ENCODE measurements at regions of chr3 and their contacts with region 1.

Region 1: DNA sequence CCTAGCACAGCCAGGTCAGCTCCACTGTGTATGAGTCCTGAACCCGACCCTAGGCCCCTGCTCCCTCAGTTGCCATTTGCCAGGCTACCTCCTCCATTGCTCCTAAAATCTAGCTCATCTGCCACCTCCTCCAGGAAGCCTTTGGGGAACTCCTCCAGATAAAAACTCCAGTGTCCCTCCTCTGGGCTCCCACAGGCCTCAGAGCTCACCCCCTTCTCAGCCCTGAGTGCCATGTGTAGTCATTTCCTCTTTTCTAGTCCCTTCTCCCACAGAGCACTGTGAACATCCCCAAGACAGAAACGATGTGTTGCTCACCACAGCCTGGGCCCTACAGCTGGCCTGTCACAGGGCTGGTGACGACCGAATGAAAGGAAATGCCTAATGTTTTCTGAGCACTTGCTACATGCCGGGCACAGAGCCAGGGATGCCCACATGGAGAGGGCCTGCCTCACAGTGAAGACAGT is 61.0 kb downstream of the IQSEC1 start:
- DNase-seq: peak; percentile 85
- H3K4me3 Mint-ChIP-seq: peak overlapping the region; percentile 75
- H3K27ac Mint-ChIP-seq: peak overlapping the region; percentile 96
- H3K4me1 Mint-ChIP-seq: peaks cover 80% of the 10 kb centered on the region
- H3K27me3 Mint-ChIP-seq: no peaks in the 10 kb centered on the region

Region 2: GRCh38 chr3:11626084-11626463 is 1386.2 kb before region 1 on chr3:
- intact Hi-C with region 1: loop called (anchors 5 kb)
- DNase-seq: peak; percentile 81
- H3K4me3 Mint-ChIP-seq: peak overlapping the region; percentile 57
- H3K27ac Mint-ChIP-seq: peak overlapping the region; percentile 77
- H3K4me1 Mint-ChIP-seq: peaks cover 56% of the 10 kb centered on the region
- H3K27me3 Mint-ChIP-seq: no peaks in the 10 kb centered on the region

Region 3: DNA sequence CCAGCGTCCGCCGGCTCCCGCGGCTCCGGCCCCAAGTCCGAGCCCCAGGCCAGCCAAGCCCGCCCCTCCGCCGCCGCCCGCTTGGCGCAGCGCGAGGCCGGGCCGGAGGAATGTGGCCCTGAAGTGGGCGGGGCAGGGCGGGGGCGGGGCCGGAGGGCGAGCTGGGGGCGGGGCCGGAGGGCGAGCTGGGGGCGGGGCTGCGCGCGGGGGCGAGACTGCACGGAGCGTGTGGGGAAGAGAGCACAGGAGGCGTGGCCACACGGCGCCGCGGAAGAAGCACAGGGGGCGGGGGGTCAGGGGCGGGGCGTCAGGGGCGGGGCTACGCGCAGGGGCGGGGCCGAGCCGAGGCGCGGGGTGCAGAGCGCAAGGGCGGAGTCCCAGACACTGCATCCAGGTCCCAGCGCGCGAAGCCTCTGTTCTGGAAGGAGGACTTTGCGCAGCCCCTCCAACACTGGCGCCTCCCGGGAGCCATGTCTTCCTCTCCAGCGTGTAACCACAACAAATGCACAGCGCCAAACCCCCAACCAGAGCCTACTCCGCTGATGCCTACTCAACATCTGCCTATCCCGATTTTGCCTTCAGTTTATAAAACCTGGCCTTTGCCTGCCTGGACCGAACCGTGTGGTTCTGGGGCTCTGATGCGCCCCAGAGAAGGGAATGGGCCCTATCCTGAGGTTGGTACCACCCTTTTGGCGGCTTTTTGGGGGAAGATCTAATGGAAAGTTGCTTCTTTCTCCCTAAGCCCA is 44.5 kb before region 1 on chr3:
- intact Hi-C with region 1: loop called (anchors 1 kb)
- DNase-seq: peak; percentile 95
- H3K4me3 Mint-ChIP-seq: peak overlapping the region; percentile 68
- H3K27ac Mint-ChIP-seq: peak overlapping the region; percentile 23
- H3K4me1 Mint-ChIP-seq: peaks cover 33% of the 10 kb centered on the region
- H3K27me3 Mint-ChIP-seq: peaks cover 3% of the 10 kb centered on the region

Region 4: DNA sequence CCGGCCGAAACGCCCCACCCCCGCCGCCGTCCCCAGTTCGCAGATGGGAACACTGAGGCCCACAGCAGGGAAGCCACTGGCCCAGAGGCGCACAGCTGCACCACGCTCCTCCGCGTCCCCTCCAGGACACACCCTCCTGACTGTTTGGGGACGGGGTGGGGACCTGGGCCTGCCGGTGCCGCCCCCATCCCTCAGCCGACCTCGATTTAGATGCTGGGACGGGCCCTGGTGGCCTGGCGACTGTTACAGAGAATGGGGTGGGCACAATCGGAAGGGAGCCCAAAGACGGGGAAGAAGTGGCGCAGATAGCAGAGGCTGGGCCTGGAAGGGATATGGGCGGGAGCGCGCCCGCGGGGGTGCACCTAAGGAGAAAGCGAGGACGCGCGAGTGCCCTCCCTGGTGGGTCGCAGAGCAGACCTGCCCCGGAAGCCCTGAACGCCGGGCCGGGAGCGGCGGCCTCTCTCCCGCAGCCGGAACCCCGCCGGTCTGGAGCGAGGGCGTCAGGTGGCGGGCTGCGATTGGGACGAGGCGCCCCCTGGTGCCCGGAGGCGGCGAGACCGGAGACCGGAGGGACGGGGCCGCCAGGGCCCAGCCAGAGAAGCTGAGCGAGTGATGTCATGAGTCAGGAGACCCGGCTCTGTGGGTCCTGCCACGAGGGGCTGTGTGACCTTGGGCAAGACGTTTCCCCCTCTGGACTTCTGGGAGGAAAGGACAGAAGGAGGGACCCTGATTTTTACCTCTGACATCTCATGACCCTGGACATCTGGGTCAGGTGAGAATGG is 17.5 kb before region 1 on chr3:
- intact Hi-C with region 1: loop called (anchors 1 kb)
- DNase-seq: peak; percentile 96
- H3K4me3 Mint-ChIP-seq: peak overlapping the region; percentile 98
- H3K27ac Mint-ChIP-seq: peak overlapping the region; percentile 87
- H3K4me1 Mint-ChIP-seq: peaks cover 22% of the 10 kb centered on the region
- H3K27me3 Mint-ChIP-seq: no peaks in the 10 kb centered on the region

Region 5: GRCh38 chr3:13057282-13058040 is 45.2 kb after region 1 on chr3:
- intact Hi-C with region 1: no loop called
- DNase-seq: no peak
- H3K4me3 Mint-ChIP-seq: no peak overlapping the region
- H3K27ac Mint-ChIP-seq: no peak overlapping the region
- H3K4me1 Mint-ChIP-seq: no peaks in the 10 kb centered on the region
- H3K27me3 Mint-ChIP-seq: no peaks in the 10 kb centered on the region

Region 6: GRCh38 chr3:13073326-13074005 is 61.2 kb after region 1 on chr3 and contains the start of gene IQSEC1:
- intact Hi-C with region 1: loop called (anchors 2 kb)
- DNase-seq: peak; percentile 92
- H3K4me3 Mint-ChIP-seq: peak within 1 kb of the TSS; percentile 83
- H3K27ac Mint-ChIP-seq: peak within 1 kb of the TSS; percentile 60
- H3K4me1 Mint-ChIP-seq: peaks cover 39% of the 10 kb centered on the region
- H3K27me3 Mint-ChIP-seq: peaks cover 38% of the 10 kb centered on the region
- total RNA-seq, gene IQSEC1: 22.5 TPM in 2 replicates

Region 7: GRCh38 chr3:13346481-13347389 is 334.5 kb after region 1 on chr3:
- intact Hi-C with region 1: no loop called
- DNase-seq: peak; percentile 91
- H3K4me3 Mint-ChIP-seq: peak overlapping the region; percentile 32
- H3K27ac Mint-ChIP-seq: peak overlapping the region; percentile 75
- H3K4me1 Mint-ChIP-seq: peaks cover 45% of the 10 kb centered on the region
- H3K27me3 Mint-ChIP-seq: no peaks in the 10 kb centered on the region

Region 8: GRCh38 chr3:13419505-13420044 is 407.3 kb after region 1 on chr3:
- intact Hi-C with region 1: loop called (anchors 2 kb)
- DNase-seq: peak; percentile 89
- H3K4me3 Mint-ChIP-seq: peak overlapping the region; percentile 92
- H3K27ac Mint-ChIP-seq: peak overlapping the region; percentile 93
- H3K4me1 Mint-ChIP-seq: peaks cover 58% of the 10 kb centered on the region
- H3K27me3 Mint-ChIP-seq: peaks cover 3% of the 10 kb centered on the region